ENCODE measurements at regions of chr9 and their contacts with region 1.

Region 1: DNA sequence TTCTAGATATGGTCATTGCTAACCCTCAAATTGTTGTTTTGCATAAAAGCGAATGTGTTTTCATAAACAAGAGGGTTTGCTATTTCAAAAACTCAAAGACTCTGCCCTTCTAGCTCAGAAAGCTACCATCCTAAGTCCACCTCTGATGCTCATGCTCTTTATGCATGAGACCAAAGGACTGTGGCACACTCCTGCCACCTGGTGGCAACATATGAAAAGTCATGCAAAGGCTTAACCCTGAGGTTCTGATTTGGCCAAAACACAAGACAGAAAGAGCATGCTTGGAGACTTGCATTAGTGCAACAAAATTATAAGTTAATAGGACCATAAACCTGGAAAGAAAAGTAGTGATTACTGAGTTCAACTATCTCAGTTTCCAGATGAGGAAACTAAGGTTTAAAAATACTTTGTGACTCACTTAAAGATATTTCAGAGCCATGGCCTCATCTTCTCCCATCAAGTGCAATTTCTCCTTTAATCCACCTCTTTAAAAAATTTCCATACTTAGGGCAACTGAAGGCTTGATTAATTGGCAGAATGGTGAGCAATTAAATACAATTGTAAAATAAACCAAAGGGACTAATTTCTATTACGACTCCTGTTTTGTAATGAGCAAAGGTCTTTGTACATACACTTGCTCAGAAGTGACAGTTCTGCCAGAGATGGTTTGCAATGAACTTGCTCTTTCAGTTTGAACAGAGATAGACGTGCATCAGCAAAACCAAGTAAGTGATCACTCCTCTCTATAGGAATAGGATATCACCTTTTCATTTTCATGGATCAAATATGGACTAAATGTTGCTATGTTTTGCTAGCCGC is 110.7 kb upstream of the RAD23B start:
- DNase-seq: peak; percentile 64 to 72
- ATAC-seq: peak; percentile 53 to 76 (median 72)
- H3K4me3 ChIP-seq: no peak overlapping the region
- H3K4me3 Mint-ChIP-seq: peak overlapping the region; percentile 6
- H3K27ac ChIP-seq: no peak overlapping the region
- H3K27ac Mint-ChIP-seq: peak overlapping the region; percentile 57 to 93
- H3K4me1 ChIP-seq: peaks cover 18% of the 10 kb centered on the region
- H3K4me1 Mint-ChIP-seq: peaks cover 51 to 55% of the 10 kb centered on the region in 2 donors
- H3K27me3 ChIP-seq: no peaks in the 10 kb centered on the region
- H3K27me3 Mint-ChIP-seq: no peaks in the 10 kb centered on the region
- CTCF ChIP-seq: peak; percentile 91

Region 2: DNA sequence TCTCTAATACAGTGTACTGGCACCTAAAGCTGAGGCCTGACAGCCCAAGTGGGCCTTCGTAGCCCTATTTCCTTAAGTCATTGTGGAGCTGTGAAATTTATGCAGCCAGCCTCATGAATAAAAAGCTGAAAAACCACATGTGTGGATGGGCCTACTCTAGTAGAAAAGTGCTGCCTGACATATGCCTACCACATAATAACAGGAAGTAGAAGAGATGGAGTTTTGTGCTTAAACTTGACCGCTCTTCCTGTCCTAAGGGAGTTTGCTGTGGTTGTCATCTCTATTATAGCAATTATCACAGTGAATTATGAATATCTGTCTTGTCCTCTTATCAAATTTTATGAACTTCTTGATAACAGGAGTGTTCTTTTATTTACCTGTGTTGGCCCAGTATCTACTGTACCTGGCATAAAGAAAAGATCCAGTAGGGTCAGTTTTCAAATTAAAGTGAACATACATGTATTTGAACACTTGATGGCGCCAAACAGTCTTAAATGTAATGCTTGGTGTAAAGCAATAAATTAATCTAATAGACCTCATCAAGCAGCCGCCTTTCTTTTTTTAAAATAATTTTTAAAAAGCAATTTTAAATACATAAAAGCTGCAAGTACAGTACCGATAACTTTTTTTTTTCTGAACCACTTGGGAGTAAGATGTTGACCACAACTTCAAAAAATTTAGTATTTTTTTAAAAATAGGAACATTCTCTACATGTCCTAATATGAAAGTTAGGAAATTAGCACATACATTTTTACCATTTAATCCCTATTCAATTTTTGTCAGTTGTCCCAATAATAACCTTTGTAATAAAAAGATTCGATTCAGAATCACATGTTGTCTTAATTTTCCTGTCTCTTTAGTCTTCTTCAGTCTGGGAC is 1563.4 kb before region 1 on chr9:
- intact Hi-C with region 1: loop called (anchors 5 kb)
- DNase-seq: peak in 1 of 2 donors; percentile 63
- ATAC-seq: peak; percentile 74 to 89 (median 80)
- H3K4me3 ChIP-seq: no peak overlapping the region
- H3K4me3 Mint-ChIP-seq: peak overlapping the region; percentile 9
- H3K27ac ChIP-seq: peak overlapping the region; percentile 30
- H3K27ac Mint-ChIP-seq: peak overlapping the region; percentile 75 to 77
- H3K4me1 ChIP-seq: no peaks in the 10 kb centered on the region
- H3K4me1 Mint-ChIP-seq: peaks cover 0 to 8% of the 10 kb centered on the region in 2 donors
- H3K27me3 ChIP-seq: no peaks in the 10 kb centered on the region
- H3K27me3 Mint-ChIP-seq: no peaks in the 10 kb centered on the region
- CTCF ChIP-seq: peak; percentile 73

Region 3: GRCh38 chr9:105901514-105902109 is 1270.8 kb before region 1 on chr9:
- intact Hi-C with region 1: loop called (anchors 5 kb)
- DNase-seq: no peak
- ATAC-seq: peak; percentile 48 to 68 (median 49)
- H3K4me3 ChIP-seq: no peak overlapping the region
- H3K4me3 Mint-ChIP-seq: no peak overlapping the region
- H3K27ac ChIP-seq: no peak overlapping the region
- H3K27ac Mint-ChIP-seq: no peak overlapping the region
- H3K4me1 ChIP-seq: no peaks in the 10 kb centered on the region
- H3K4me1 Mint-ChIP-seq: no peaks in the 10 kb centered on the region
- H3K27me3 ChIP-seq: no peaks in the 10 kb centered on the region
- H3K27me3 Mint-ChIP-seq: peaks cover 7 to 8% of the 10 kb centered on the region in 2 donors
- CTCF ChIP-seq: peak; percentile 30

Region 4: DNA sequence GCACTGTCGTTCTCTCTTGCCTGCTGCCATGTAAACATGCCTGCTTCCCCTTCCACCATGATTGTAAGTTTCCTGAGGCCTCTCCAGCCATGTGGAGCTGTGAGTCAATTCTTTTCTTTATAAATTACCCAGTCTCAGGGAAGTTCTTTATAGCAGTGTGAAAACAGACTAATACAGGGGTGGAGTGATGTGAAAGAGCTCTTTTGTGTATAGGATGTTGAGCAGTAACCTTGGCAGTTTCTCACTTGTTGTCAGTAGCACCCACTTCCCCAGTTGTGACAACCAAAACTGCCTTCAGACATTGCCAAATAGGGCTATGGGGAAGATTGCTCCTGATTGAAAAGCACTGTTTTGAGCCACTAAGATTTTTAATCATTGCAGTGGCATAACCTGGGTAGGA is 861.6 kb before region 1 on chr9:
- intact Hi-C with region 1: loop called (anchors 10 kb)
- DNase-seq: peak; percentile 21 to 30
- ATAC-seq: peak; percentile 80 to 89 (median 88)
- H3K4me3 ChIP-seq: no peak overlapping the region
- H3K4me3 Mint-ChIP-seq: peak overlapping the region; percentile 77
- H3K27ac ChIP-seq: peak overlapping the region; percentile 93
- H3K27ac Mint-ChIP-seq: peak overlapping the region; percentile 94 to 96
- H3K4me1 ChIP-seq: peaks cover 8% of the 10 kb centered on the region
- H3K4me1 Mint-ChIP-seq: peaks cover 76 to 83% of the 10 kb centered on the region in 2 donors
- H3K27me3 ChIP-seq: no peaks in the 10 kb centered on the region
- H3K27me3 Mint-ChIP-seq: no peaks in the 10 kb centered on the region
- CTCF ChIP-seq: no peak

Region 5: GRCh38 chr9:107033966-107034365 is 138.4 kb before region 1 on chr9:
- intact Hi-C with region 1: no loop called
- DNase-seq: no peak
- ATAC-seq: no peak
- H3K4me3 ChIP-seq: no peak overlapping the region
- H3K4me3 Mint-ChIP-seq: no peak overlapping the region
- H3K27ac ChIP-seq: no peak overlapping the region
- H3K27ac Mint-ChIP-seq: no peak overlapping the region
- H3K4me1 ChIP-seq: no peaks in the 10 kb centered on the region
- H3K4me1 Mint-ChIP-seq: no peaks in the 10 kb centered on the region
- H3K27me3 ChIP-seq: no peaks in the 10 kb centered on the region
- H3K27me3 Mint-ChIP-seq: peaks cover 0 to 6% of the 10 kb centered on the region in 2 donors
- CTCF ChIP-seq: no peak

Region 6: GRCh38 chr9:107137495-107138202 is 34.7 kb before region 1 on chr9:
- intact Hi-C with region 1: loop called (anchors 2 kb)
- DNase-seq: peak in 1 of 2 donors; percentile 44
- ATAC-seq: peak in 2 of 3 donors; percentile 38 to 47
- H3K4me3 ChIP-seq: no peak overlapping the region
- H3K4me3 Mint-ChIP-seq: no peak overlapping the region
- H3K27ac ChIP-seq: no peak overlapping the region
- H3K27ac Mint-ChIP-seq: no peak overlapping the region
- H3K4me1 ChIP-seq: no peaks in the 10 kb centered on the region
- H3K4me1 Mint-ChIP-seq: no peaks in the 10 kb centered on the region
- H3K27me3 ChIP-seq: no peaks in the 10 kb centered on the region
- H3K27me3 Mint-ChIP-seq: peaks cover 19 to 21% of the 10 kb centered on the region in 2 donors
- CTCF ChIP-seq: peak; percentile 77

Region 7: GRCh38 chr9:107213561-107214028 is 41.2 kb after region 1 on chr9:
- intact Hi-C with region 1: loop called (anchors 1 kb)
- DNase-seq: peak; percentile 43 to 53
- ATAC-seq: peak; percentile 93 to 99 (median 95)
- H3K4me3 ChIP-seq: no peak overlapping the region
- H3K4me3 Mint-ChIP-seq: peak overlapping the region; percentile 37
- H3K27ac ChIP-seq: peak overlapping the region; percentile 75
- H3K27ac Mint-ChIP-seq: peak overlapping the region; percentile 82 to 93
- H3K4me1 ChIP-seq: peaks cover 18% of the 10 kb centered on the region
- H3K4me1 Mint-ChIP-seq: peaks cover 22 to 41% of the 10 kb centered on the region in 2 donors
- H3K27me3 ChIP-seq: no peaks in the 10 kb centered on the region
- H3K27me3 Mint-ChIP-seq: peaks cover 0 to 2% of the 10 kb centered on the region in 2 donors
- CTCF ChIP-seq: no peak

Region 8: DNA sequence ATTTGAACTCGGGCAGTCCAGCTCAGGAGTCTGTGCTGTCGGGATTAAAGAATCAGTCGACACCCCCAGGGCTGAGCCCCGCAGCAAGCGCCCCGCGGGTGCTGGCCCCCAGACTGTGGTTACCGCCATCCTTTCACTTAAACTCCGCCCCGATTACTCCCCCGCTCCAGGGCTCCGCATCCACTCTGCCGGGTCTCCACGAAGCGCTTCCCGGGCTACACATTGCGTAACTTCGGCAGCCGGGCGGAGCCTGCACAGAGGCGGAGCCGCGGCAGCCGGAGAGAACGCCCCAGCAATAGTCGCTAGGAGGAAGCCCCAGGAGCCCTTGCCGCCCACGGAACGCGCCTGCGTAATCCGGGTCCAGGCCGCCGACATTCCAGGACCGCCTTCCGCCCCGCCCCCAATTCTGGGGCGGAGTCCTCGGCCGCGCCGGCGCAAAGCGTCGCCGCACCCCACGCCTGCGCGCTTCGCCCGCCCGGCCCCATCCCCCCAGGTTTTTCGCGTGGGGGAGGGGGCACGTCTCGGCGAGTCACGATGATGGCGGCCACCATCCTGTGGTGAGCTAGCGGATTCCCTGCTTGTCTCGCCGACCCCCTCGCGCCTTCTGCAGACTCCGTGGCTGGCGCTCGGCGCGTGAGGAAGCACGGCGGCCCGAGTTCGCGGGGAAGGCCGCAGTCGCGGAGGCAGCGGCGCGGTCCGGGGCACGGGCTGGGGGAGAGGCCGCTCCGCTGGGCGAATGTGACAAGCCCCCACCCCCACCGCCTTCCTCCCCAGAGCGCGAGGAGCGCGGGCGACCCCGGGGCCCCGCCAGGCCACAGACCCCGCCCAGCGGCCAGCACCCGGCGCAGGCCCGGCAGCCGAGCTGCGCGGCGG is 110.6 kb after region 1 on chr9 and contains the start of gene RAD23B:
- intact Hi-C with region 1: loop called (anchors 2 kb)
- DNase-seq: peak; percentile 99
- ATAC-seq: peak; percentile 84 to 95 (median 87)
- H3K4me3 ChIP-seq: peak within 1 kb of the TSS; percentile 87
- H3K4me3 Mint-ChIP-seq: peak within 1 kb of the TSS; percentile 99
- H3K27ac ChIP-seq: peak within 1 kb of the TSS; percentile 91
- H3K27ac Mint-ChIP-seq: peak within 1 kb of the TSS; percentile 88 to 92
- H3K4me1 ChIP-seq: peaks cover 14% of the 10 kb centered on the region
- H3K4me1 Mint-ChIP-seq: peaks cover 42 to 48% of the 10 kb centered on the region in 2 donors
- H3K27me3 ChIP-seq: no peaks in the 10 kb centered on the region
- H3K27me3 Mint-ChIP-seq: peaks cover 0 to 6% of the 10 kb centered on the region in 2 donors
- CTCF ChIP-seq: no peak
- total RNA-seq, gene RAD23B: 85.6 to 101 (median 92.6) TPM

Measured in natural killer cell (primary cell).